Naive thymus-derived CD4-positive, alpha-beta T cell (primary cell): ENCODE measurements at regions of chr22 and their contacts with region 1.

Region 1: GRCh38 chr22:25404928-25405816 is 159.3 kb upstream of the GRK3 start:
- DNase-seq: peak; percentile 44 to 82 (median 56)
- ATAC-seq: peak; percentile 83
- H3K4me3 ChIP-seq: peak overlapping the region; percentile 54
- H3K4me3 Mint-ChIP-seq: peak overlapping the region; percentile 66 to 92 (median 80)
- H3K27ac ChIP-seq: peak overlapping the region; percentile 83
- H3K27ac Mint-ChIP-seq: peak overlapping the region; percentile 51 to 87 (median 77)
- H3K4me1 ChIP-seq: peaks cover 6 to 17% of the 10 kb centered on the region in 2 donors
- H3K4me1 Mint-ChIP-seq: peaks cover 24 to 40% (median 37%) of the 10 kb centered on the region in 7 donors
- H3K27me3 ChIP-seq: no peaks in the 10 kb centered on the region
- H3K27me3 Mint-ChIP-seq: no peaks in the 10 kb centered on the region

Region 2: GRCh38 chr22:25067851-25068421 is 337.2 kb before region 1 on chr22:
- CTCF ChIA-PET with region 1: no interaction called
- POLR2A ChIA-PET with region 1: interaction called, 3 read pairs
- intact Hi-C with region 1: loop called in 1 of 2 experiments (anchors 10 kb)
- DNase-seq: peak; percentile 56 to 95 (median 92)
- ATAC-seq: peak; percentile 94
- H3K4me3 ChIP-seq: peak overlapping the region; percentile 43
- H3K4me3 Mint-ChIP-seq: peak overlapping the region; percentile 81 to 94 (median 87)
- H3K27ac ChIP-seq: peak overlapping the region; percentile 76
- H3K27ac Mint-ChIP-seq: peak overlapping the region; percentile 86 to 99 (median 98)
- H3K4me1 ChIP-seq: peaks cover 63 to 67% of the 10 kb centered on the region in 2 donors
- H3K4me1 Mint-ChIP-seq: peaks cover 51 to 96% (median 89%) of the 10 kb centered on the region in 7 donors
- H3K27me3 ChIP-seq: no peaks in the 10 kb centered on the region
- H3K27me3 Mint-ChIP-seq: no peaks in the 10 kb centered on the region

Region 3: GRCh38 chr22:25362215-25362882 is 42.8 kb before region 1 on chr22:
- CTCF ChIA-PET with region 1: no interaction called
- POLR2A ChIA-PET with region 1: no interaction called
- intact Hi-C with region 1: loop called in 1 of 2 experiments (anchors 2 kb)
- DNase-seq: peak in 8 of 9 donors; percentile 34 to 79 (median 50)
- ATAC-seq: peak; percentile 60
- H3K4me3 ChIP-seq: no peak overlapping the region
- H3K4me3 Mint-ChIP-seq: no peak overlapping the region
- H3K27ac ChIP-seq: no peak overlapping the region
- H3K27ac Mint-ChIP-seq: no peak overlapping the region
- H3K4me1 ChIP-seq: no peaks in the 10 kb centered on the region
- H3K4me1 Mint-ChIP-seq: peaks cover 0 to 6% (median 0%) of the 10 kb centered on the region in 7 donors
- H3K27me3 ChIP-seq: no peaks in the 10 kb centered on the region
- H3K27me3 Mint-ChIP-seq: no peaks in the 10 kb centered on the region

Region 4: DNA sequence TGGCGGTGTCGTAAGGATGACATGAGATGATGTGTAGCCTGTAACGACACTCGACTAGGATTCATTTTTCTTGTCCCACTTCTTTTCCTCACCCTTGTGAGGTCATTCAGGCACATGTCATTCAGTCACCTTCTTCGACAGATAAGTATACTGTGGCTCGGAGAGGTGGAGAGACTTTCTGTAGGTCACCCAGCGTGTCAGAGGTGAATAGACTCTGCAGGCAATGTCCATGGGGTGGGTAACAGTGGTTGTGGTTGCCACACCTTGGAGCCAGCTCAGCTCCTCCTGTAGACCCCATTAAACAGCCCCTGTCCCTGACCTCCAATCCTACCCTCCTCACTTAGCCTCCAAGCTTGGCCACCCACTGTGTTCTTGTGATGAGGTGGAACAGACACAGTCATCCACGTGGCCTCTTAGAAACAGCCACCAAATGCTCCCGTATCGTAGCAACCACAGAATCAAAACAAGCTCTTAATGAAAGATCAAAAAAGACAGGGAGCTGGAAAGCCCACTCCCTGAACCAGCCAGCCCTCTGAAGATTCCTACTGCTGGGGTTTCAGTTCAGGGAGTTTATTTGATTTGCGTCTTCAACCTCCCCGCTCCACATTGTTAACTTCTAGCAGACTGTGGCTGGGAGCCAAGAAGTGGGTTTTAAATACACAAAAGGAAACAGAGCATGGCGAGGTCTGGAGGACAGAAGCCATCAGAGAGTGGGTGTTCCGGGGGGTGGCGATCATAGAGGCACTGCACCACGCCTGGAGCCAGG is 70.3 kb after region 1 on chr22:
- CTCF ChIA-PET with region 1: no interaction called
- POLR2A ChIA-PET with region 1: no interaction called
- intact Hi-C with region 1: no loop called
- DNase-seq: no peak
- ATAC-seq: no peak
- H3K4me3 ChIP-seq: no peak overlapping the region
- H3K4me3 Mint-ChIP-seq: no peak overlapping the region
- H3K27ac ChIP-seq: no peak overlapping the region
- H3K27ac Mint-ChIP-seq: no peak overlapping the region
- H3K4me1 ChIP-seq: no peaks in the 10 kb centered on the region
- H3K4me1 Mint-ChIP-seq: peaks cover 0 to 9% (median 7%) of the 10 kb centered on the region in 7 donors
- H3K27me3 ChIP-seq: no peaks in the 10 kb centered on the region
- H3K27me3 Mint-ChIP-seq: peaks cover 0 to 12% (median 0%) of the 10 kb centered on the region in 5 donors